Posterior vena cava (tissue), 2 donors: ENCODE measurements at regions of chr10 and their contacts with region 1.

Region 1: GRCh38 chr10:83724471-83725241 is 414.7 kb upstream of the GHITM start:
- DNase-seq: no peak

Region 2: GRCh38 chr10:83736008-83736407 is 11.4 kb after region 1 on chr10:
- intact Hi-C with region 1: loop called in 1 of 2 experiments (anchors 1 kb)
- DNase-seq: no peak

Region 3: DNA sequence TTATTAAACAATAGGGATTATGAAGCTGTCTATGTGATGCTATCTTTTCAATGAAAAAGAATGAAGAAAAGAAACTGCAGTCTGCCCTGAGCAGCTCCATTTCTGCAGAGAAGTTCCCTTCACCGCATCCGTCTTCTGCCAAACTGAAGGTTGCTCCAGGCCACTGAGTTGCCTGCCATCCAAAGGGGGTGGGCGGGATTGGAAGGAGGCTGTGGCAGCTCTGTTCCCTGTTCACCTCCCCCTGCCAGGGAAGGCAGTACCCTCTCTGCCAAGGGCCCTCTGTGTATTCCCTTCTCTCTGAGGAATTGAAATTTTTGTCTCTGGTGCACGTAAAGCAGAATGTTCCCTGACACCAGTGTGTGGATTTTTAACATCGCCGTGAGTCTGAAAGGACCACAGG is 171.6 kb after region 1 on chr10:
- intact Hi-C with region 1: no loop called
- DNase-seq: no peak

Region 4: GRCh38 chr10:84194424-84195040 is 469.9 kb after region 1 on chr10 and contains the start of gene CDHR1:
- intact Hi-C with region 1: loop called in 1 of 2 experiments (anchors 10 kb)
- DNase-seq: no peak
- total RNA-seq, gene CDHR1: 0.14 to 0.28 TPM